ENCODE measurements at regions of chr20 and their contacts with region 1.

Region 1: DNA sequence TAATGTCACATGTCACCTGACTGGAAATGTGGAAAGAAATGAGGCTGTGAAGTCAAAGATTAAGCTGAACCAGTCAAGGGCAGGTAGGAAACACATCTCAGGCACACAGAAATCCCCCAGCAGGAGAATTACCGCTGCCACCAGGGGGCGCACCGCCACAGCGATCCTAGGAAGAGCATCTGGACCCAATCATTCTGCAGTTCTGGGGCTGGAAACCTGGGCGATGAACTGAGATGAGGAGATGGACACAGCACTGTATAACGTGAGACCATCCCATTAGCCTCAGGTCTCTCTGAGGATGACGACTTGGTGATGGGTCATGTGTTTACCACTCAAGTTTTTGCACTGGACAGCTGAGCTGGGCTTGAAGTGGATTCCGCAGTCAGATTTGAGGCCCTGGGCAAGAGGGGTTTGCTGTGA is 6.5 kb upstream of the SLC24A3 start:
- DNase-seq: peak; percentile 77 to 83
- H3K4me3 ChIP-seq: no peak overlapping the region
- H3K27ac ChIP-seq: no peak overlapping the region
- H3K4me1 ChIP-seq: peaks cover 2 to 9% of the 10 kb centered on the region in 2 donors
- H3K27me3 ChIP-seq: no peaks in the 10 kb centered on the region
- CTCF ChIP-seq: peak; percentile 76 to 91 (median 86)
- POLR2A ChIP-seq: no peak

Region 2: DNA sequence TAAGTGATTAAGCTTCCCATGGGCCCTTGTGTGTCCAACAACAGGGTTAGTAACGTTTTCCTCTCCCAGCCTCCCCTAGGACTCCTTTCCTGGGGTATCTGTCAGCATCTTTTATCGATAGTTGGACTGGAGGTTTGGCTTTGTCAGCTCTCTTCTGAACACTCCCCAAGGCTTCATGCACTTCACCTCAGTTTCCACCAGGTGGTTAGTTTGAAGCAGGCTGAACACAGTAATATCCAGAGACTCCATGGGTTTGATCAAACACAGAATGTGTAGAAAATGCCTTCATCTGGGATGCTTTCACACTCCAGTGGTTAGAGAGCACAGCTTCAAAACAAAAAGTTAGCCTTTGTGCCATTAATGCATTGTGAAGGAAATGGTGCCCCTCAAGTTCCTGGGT is 145.6 kb after region 1 on chr20:
- intact Hi-C with region 1: no loop called
- DNase-seq: no peak
- H3K4me3 ChIP-seq: no peak overlapping the region
- H3K27ac ChIP-seq: no peak overlapping the region
- H3K4me1 ChIP-seq: peaks cover 0 to 6% of the 10 kb centered on the region in 2 donors
- H3K27me3 ChIP-seq: no peaks in the 10 kb centered on the region
- CTCF ChIP-seq: peak in 1 of 6 experiments; percentile 10
- POLR2A ChIP-seq: no peak

Region 3: GRCh38 chr20:19583532-19584175 is 377.7 kb after region 1 on chr20:
- intact Hi-C with region 1: loop called (anchors 2 kb)
- DNase-seq: peak; percentile 87 to 90
- H3K4me3 ChIP-seq: no peak overlapping the region
- H3K27ac ChIP-seq: no peak overlapping the region
- H3K4me1 ChIP-seq: no peaks in the 10 kb centered on the region
- H3K27me3 ChIP-seq: no peaks in the 10 kb centered on the region
- CTCF ChIP-seq: peak; percentile 82 to 96 (median 93)
- POLR2A ChIP-seq: no peak

Region 4: GRCh38 chr20:19661717-19662636 is 456.0 kb after region 1 on chr20:
- intact Hi-C with region 1: loop called (anchors 2 kb)
- DNase-seq: peak; percentile 83
- H3K4me3 ChIP-seq: no peak overlapping the region
- H3K27ac ChIP-seq: peak overlapping the region in 1 of 3 donors; percentile 51
- H3K4me1 ChIP-seq: peaks cover 7 to 13% of the 10 kb centered on the region in 2 donors
- H3K27me3 ChIP-seq: no peaks in the 10 kb centered on the region
- CTCF ChIP-seq: peak; percentile 96 to 99 (median 97)
- POLR2A ChIP-seq: no peak

Measured in thyroid gland (tissue), 4 donors.